ENCODE measurements at regions of chr4 and their contacts with region 1.

Region 1: GRCh38 chr4:81405894-81406401 is 65.8 kb downstream of the RASGEF1B start:
- DNase-seq: no peak
- H3K4me3 ChIP-seq: no peak overlapping the region
- CTCF ChIP-seq: peak in 1 of 3 donors; percentile 64
- POLR2A ChIP-seq: no peak

Region 2: DNA sequence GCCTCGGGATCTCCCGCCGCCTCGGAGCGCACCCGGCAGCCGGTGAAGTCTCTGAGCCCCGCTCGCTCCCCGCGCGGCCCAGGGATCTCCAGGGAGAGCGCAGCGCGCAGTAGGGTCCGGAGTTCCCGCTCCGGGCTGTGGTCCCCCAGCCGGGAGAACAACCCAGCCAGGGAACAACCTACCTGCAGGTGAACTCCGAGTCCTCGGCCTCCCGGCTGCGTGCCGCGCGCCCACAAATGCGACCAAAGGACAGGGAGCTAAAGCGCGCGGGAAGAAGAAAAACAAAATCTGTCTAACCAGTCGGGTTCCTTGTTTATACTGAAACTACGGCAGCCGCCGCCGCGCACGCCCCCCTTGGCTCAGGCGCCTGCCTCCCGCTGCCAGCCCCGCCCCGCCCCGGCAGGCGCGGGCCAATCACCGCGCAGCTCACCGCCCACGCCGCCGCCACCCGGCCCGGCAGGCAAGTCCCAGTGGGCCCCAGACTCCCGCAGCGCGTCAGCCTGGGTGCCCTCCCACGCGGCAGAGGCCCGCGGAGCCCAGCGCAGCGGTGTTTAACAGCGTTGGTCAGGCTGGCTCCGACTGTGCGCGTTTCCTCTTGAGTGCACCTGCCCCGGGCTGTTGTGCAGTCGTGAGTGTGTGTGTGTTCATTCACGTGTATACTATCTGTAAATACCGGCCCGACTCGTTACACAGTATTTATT is 65.8 kb after region 1 on chr4 and contains the start of gene RASGEF1B:
- intact Hi-C with region 1: loop called (anchors 1 kb)
- DNase-seq: peak; percentile 88 to 97
- H3K4me3 ChIP-seq: peak within 1 kb of the TSS; percentile 94
- CTCF ChIP-seq: no peak
- POLR2A ChIP-seq: no peak
- total RNA-seq, gene RASGEF1B: 53.7 to 58.2 (median 57.6) TPM

Region 3: GRCh38 chr4:81565142-81565870 is 159.4 kb after region 1 on chr4:
- intact Hi-C with region 1: no loop called
- DNase-seq: peak; percentile 75 to 96
- H3K4me3 ChIP-seq: no peak overlapping the region
- CTCF ChIP-seq: no peak
- POLR2A ChIP-seq: no peak

Region 4: DNA sequence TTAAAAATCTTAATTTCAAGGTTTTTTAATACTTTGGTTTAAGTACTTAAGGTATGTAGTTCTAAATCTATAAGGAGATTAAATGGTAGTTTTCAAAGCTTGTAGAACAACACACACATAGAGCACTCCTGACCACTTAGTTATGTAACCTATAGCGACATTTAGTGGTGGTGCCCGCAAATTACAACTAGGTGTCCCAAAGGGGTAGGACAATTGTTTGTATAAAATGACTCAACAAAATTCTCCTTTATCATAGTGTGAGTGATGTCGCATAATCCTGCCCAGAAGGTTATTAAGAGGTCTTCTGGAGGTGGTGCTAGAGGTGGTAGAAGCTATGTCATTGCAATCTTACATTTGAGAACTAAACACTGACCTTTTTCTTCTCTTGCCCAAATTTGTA is 438.8 kb after region 1 on chr4:
- intact Hi-C with region 1: loop called (anchors 5 kb)
- DNase-seq: peak; percentile 83 to 94
- H3K4me3 ChIP-seq: no peak overlapping the region
- CTCF ChIP-seq: peak in 1 of 3 donors; percentile 58
- POLR2A ChIP-seq: no peak

Region 5: DNA sequence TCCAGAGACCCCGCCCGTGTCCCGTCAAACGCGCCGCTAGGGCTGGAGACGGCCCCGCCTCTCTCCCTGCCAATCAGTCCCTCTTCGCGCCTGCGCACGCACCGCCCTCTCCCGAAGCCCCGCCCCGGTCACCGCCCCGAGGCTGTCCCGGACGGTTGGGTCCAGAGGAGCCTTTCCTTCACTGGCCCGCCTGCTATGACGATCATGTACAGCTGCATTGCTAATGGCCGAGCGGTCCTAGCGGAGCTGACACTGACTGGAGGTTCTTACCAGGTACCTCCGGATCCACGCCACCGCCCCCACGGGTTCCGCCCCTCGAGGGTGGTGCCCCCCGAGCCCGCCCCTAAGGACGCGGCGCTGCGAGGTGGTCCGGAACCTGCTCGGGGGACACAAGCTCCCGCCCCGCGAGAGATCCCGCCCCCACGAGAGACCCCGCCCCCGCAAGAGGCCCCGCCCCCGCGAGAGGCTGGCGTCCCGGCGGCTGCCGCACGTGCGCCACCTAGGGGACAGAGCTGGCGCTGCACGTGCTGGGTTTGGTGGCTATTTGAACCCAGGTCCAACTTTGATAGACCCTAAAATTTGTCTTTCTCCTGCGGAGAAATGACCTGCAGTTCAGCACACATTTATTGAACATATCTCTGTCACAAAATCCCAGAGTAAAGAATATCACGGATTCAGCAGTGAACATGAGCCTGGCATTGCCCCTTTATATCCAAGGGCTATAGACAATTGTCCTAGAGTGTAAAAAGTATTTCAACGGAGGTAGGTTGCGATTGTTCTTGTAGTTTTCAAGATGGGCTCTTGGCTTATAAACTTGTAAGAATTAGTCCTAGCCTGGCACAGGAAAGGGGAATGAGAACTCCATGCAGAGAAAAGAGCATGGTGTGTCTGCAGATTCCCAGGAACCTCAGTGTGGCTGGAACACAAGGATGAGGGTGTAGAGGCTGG is 879.2 kb after region 1 on chr4:
- intact Hi-C with region 1: loop called (anchors 10 kb)
- DNase-seq: peak; percentile 99 to 100
- H3K4me3 ChIP-seq: peak overlapping the region; percentile 15
- CTCF ChIP-seq: no peak
- POLR2A ChIP-seq: no peak

Measured in lower leg skin (tissue), 4 donors.